Endothelial cell of umbilical vein (primary cell): ENCODE measurements at regions of chr1 and their contacts with region 1.

Region 1: GRCh38 chr1:154878371-154879022 is 8.4 kb upstream of the KCNN3 start:
- DNase-seq: peak; percentile 72
- H3K4me3 ChIP-seq: no peak overlapping the region
- H3K27ac ChIP-seq: no peak overlapping the region
- H3K4me1 ChIP-seq: peaks cover 9% of the 10 kb centered on the region
- H3K27me3 ChIP-seq: no peaks in the 10 kb centered on the region
- CTCF ChIP-seq: peak; percentile 86 to 94
- POLR2A ChIP-seq: no peak

Region 2: GRCh38 chr1:154583773-154584172 is 294.7 kb before region 1 on chr1:
- CTCF ChIA-PET with region 1: interaction called, 11 read pairs
- POLR2A ChIA-PET with region 1: no interaction called
- dilution Hi-C with region 1: no loop called
- intact Hi-C with region 1: loop called (anchors 1 kb)
- DNase-seq: peak; percentile 38
- H3K4me3 ChIP-seq: no peak overlapping the region
- H3K27ac ChIP-seq: peak overlapping the region; percentile 58
- H3K4me1 ChIP-seq: peaks cover 28% of the 10 kb centered on the region
- H3K27me3 ChIP-seq: no peaks in the 10 kb centered on the region
- CTCF ChIP-seq: no peak
- POLR2A ChIP-seq: no peak

Region 3: GRCh38 chr1:154669464-154670282 is 208.8 kb before region 1 on chr1:
- CTCF ChIA-PET with region 1: interaction called, 113 read pairs
- POLR2A ChIA-PET with region 1: no interaction called
- dilution Hi-C with region 1: no loop called
- intact Hi-C with region 1: loop called (anchors 1 kb)
- DNase-seq: peak; percentile 88
- H3K4me3 ChIP-seq: no peak overlapping the region
- H3K27ac ChIP-seq: no peak overlapping the region
- H3K4me1 ChIP-seq: no peaks in the 10 kb centered on the region
- H3K27me3 ChIP-seq: no peaks in the 10 kb centered on the region
- CTCF ChIP-seq: peak; percentile 76 to 82
- POLR2A ChIP-seq: no peak

Region 4: DNA sequence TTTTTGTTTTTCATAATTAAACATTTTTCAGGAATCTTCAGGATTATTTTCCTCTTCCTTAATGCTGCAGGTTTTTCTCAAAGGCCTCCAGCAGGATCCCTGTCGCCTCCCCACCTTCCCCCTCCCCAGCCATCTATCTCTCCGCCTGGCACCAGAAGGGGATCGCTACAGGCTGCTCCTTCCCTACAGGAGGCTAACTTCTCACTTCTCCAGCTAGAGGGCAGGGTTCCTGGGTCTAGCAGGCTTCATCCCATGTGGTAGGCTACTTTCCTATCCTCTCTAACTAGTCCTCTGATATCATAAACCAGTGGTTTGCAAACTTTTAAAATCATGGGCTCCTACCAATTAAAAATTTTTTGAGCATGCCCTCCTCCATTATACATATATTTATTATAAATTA is 112.5 kb before region 1 on chr1:
- CTCF ChIA-PET with region 1: interaction called, 50 read pairs
- POLR2A ChIA-PET with region 1: no interaction called
- dilution Hi-C with region 1: no loop called
- intact Hi-C with region 1: loop called (anchors 1 kb)
- DNase-seq: peak; percentile 29
- H3K4me3 ChIP-seq: no peak overlapping the region
- H3K27ac ChIP-seq: no peak overlapping the region
- H3K4me1 ChIP-seq: peaks cover 2% of the 10 kb centered on the region
- H3K27me3 ChIP-seq: peaks cover 9 to 33% of the 10 kb centered on the region in 2 experiments
- CTCF ChIP-seq: peak; percentile 13 to 47
- POLR2A ChIP-seq: no peak

Region 5: GRCh38 chr1:154837672-154838171 is 40.8 kb before region 1 on chr1:
- CTCF ChIA-PET with region 1: interaction called, 5 read pairs
- POLR2A ChIA-PET with region 1: no interaction called
- dilution Hi-C with region 1: no loop called
- intact Hi-C with region 1: loop called (anchors 5 kb)
- DNase-seq: no peak
- H3K4me3 ChIP-seq: no peak overlapping the region
- H3K27ac ChIP-seq: no peak overlapping the region
- H3K4me1 ChIP-seq: peaks cover 22% of the 10 kb centered on the region
- H3K27me3 ChIP-seq: no peaks in the 10 kb centered on the region
- CTCF ChIP-seq: no peak
- POLR2A ChIP-seq: no peak

Region 6: DNA sequence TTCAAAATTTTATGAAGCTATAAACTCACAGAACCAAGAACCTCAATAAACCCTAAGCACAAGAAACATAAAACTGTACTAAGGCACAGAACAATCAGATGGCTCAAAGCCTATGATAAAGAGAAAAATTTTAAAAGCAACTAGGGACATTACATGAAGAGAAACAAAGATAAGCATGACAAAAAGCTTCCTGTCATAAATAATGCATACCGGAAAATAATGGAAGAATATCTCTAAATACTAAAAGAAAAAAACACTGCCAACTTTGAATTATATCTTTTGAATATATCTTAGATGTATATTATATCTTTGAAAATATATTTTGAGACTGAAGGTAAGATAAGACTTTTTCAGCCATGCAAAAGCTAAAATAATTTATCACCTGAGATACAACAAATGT is 13.0 kb after region 1 on chr1:
- CTCF ChIA-PET with region 1: interaction called, 15 read pairs
- POLR2A ChIA-PET with region 1: no interaction called
- dilution Hi-C with region 1: no loop called
- intact Hi-C with region 1: no loop called
- DNase-seq: no peak
- H3K4me3 ChIP-seq: no peak overlapping the region
- H3K27ac ChIP-seq: no peak overlapping the region
- H3K4me1 ChIP-seq: no peaks in the 10 kb centered on the region
- H3K27me3 ChIP-seq: peaks cover 9 to 15% of the 10 kb centered on the region in 2 experiments
- CTCF ChIP-seq: no peak
- POLR2A ChIP-seq: no peak

Region 7: DNA sequence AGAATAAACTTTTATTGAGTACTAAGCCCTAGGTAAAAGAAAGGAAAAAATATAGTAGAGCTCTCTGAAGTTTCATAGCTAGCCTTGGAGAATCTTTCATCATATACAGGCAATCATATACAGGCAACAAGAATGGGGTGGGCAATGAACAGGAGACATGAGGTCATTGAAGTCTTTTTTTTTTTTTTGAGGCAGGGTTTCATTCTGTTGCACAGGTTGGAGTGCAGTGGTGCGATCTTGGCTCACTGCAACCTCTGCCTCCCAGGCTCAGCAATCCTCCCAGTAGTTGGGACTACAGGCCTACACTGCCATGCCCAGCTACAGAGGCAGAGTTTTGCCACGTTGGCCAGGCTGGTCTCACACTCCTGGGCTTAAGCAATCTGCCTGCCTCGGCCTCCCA is 464.3 kb after region 1 on chr1:
- CTCF ChIA-PET with region 1: no interaction called
- POLR2A ChIA-PET with region 1: no interaction called
- dilution Hi-C with region 1: no loop called
- intact Hi-C with region 1: no loop called
- DNase-seq: no peak
- H3K4me3 ChIP-seq: no peak overlapping the region
- H3K27ac ChIP-seq: no peak overlapping the region
- H3K4me1 ChIP-seq: no peaks in the 10 kb centered on the region
- H3K27me3 ChIP-seq: no peaks in the 10 kb centered on the region
- CTCF ChIP-seq: no peak
- POLR2A ChIP-seq: no peak